A673 (cell line): ENCODE measurements at regions of chr19 and their contacts with region 1.

Region 1: GRCh38 chr19:42254989-42255765 is at the start of gene ERF:
- DNase-seq: peak; percentile 95
- H3K4me3 ChIP-seq: peak within 1 kb of the TSS; percentile 91
- H3K27ac ChIP-seq: peak within 1 kb of the TSS; percentile 95
- H3K4me1 ChIP-seq: peaks cover 34% of the 10 kb centered on the region
- H3K27me3 ChIP-seq: no peaks in the 10 kb centered on the region
- CTCF ChIP-seq: no peak
- total RNA-seq, gene ERF: 149 and 164 TPM in 2 replicates

Region 2: DNA sequence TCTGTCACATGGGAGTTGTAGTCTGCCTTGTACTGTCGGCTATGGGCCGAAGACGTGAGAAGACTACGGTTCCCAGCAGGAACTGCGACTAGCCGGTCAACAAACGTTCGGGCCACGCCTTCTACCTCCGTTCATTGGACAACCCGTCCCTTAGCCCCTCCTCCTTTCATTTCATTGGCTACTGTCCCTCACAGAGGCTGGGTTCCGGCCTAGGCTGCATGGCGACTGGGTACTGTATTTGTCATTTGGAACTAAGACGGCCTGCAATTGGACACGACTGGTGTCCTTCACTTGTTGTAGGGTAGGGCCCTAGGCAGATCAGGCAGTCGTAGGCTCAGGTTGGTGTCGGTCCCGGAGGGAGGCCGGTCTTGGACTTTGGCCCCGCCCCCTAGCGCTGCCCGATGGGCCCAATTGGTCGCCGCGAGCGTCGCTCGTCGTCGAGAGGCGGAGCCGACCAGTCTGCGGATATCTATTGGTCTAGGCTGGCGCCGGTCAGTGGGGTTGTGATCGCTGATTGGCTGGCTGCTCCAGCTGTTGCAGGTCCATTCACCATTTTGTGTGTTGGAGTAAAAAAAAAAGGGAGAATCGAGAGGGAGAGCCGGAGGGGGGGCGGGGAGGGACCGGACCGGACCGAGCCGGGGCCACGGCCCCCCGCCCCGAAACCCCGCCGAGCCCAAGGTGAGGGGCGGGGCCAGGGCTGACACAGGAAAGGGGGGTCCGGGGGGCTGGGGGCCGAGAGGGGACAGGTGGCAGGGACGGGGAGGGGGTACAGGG is 13.7 kb after region 1 on chr19 and contains the start of gene CIC:
- CTCF ChIA-PET with region 1: no interaction called
- POLR2A ChIA-PET with region 1: no interaction called
- intact Hi-C with region 1: loop called (anchors 2 kb)
- DNase-seq: peak; percentile 100
- H3K4me3 ChIP-seq: peak within 1 kb of the TSS; percentile 62
- H3K27ac ChIP-seq: peak within 1 kb of the TSS; percentile 99
- H3K4me1 ChIP-seq: peaks cover 18% of the 10 kb centered on the region
- H3K27me3 ChIP-seq: no peaks in the 10 kb centered on the region
- CTCF ChIP-seq: no peak
- total RNA-seq, gene CIC: 75.8 and 80.3 TPM in 2 replicates